Posterior vena cava (tissue), 2 donors: ENCODE measurements at regions of chr2 and their contacts with region 1.

Region 1: GRCh38 chr2:119311356-119311755 is 55.3 kb downstream of the C2orf76 start:
- DNase-seq: no peak

Region 2: GRCh38 chr2:119142824-119143223 is 168.5 kb before region 1 on chr2:
- intact Hi-C with region 1: no loop called
- DNase-seq: no peak

Region 3: GRCh38 chr2:119383410-119384140 is 72.2 kb after region 1 on chr2:
- intact Hi-C with region 1: no loop called
- DNase-seq: no peak

Region 4: DNA sequence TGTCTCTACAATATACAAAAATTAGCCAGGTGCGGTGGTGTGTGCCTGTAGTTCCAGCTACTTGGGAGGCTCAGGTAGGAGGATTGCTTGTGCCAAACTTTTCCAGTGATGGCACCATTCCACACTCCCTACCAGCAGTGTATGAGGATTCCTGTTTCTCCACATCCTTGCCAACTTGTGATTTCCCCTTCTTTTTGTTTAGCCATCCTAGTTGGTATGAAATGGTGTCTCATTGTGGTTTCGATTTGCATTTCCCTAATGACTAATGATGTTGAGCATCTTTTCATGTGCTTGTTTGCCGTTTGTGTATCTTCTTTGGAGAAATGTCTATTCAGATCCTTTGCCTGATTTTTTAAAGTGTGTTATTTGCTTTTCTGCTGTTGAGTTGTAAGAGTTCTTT is 742.5 kb after region 1 on chr2:
- intact Hi-C with region 1: loop called in 1 of 2 experiments (anchors 5 kb)
- DNase-seq: no peak